ENCODE measurements at regions of chr14 and their contacts with region 1.

Region 1: DNA sequence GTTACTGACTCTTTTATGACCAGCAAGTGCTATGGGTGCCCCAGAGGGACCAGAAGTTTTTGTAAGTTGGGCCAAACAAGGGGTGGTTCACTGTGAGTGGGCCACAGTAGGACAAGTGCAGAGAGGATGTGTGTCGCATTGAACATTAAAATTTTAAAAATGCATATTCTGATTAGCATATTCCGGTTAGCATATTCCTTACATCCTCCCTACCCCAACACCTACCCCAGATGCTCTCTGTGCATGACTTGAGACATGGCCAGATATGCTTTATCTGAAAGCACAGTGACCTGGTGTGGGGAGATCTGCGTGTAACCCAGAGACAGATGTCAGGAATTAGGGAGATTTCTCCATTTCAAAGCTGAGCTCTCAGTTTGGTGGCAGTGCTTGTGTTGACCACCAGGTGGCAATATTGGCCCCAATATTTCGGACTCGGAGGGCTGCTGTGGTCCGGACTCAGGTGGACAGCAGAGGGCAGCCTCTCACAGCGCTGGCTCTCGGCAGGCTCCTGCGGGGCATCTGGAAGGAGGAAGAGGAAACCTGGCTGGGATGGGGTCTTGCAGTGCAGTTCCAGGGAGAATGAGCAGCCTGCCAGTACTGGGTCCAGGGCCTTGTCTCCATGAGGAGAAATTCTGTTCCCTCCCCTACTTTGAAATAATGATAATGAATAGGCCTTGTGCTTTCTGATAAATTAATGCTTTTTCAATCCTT is 1.6 kb upstream of the CEBPE start:
- DNase-seq: peak; percentile 81 to 92
- ATAC-seq: peak; percentile 86 to 95
- H3K4me3 ChIP-seq: no peak overlapping the region
- H3K27ac ChIP-seq: no peak overlapping the region; a peak in 1 of 6 replicates
- H3K4me1 ChIP-seq: peaks cover 2% of the 10 kb centered on the region; the same call in 2 of the 3 replicates
- CTCF ChIP-seq: peak; percentile 100
- EP300 ChIP-seq: no peak
- POLR2A ChIP-seq: no peak
- RAD21 ChIP-seq: peak; percentile 99

Region 2: DNA sequence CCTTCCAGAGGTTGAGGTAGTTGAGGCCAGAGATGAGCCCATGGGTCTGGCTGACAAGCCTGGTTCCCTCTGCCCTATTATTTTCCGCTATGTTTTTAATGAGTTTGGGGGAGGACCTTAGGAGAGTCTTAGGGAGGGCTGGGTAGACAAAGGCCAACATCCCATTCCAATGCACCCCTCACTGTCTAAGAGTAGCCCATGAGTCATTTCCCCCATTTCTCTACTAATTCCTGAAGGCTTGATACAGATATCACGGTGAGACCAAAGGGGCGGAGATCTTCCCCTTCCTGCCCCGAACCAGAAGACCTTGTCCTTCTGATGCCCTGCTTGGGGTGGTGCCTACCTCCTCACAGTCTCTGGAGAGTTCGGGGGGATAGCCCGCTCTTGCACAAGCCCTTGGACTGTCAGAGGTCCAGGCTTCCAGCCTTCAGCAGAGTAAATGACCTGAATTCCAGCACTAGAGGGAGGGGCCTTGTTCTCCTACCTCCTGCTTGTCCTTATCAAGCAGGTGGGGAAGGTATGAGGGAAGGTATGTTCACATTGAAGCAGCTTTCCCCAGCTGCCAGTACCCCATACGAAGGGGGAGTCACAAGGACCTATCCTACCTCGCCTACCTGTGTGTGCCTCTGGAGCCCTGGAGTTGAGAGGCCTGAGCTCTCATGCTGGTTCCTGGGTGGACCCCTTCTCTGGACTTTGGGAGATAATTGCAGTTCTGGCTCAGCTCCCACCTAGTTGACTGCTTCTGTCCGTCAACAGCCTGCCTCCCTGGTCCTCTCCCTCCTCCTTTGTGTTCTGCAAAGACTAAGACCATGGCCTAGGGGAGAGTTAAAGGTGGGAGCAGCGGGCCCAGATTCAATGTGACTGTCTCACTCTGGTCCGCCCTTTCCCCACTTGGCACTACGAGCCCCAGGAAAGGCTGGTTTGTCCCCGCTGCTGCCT is 75.0 kb before region 1 on chr14:
- CTCF ChIA-PET with region 1: no interaction called
- POLR2A ChIA-PET with region 1: no interaction called
- DNase-seq: no peak
- ATAC-seq: no peak
- H3K4me3 ChIP-seq: no peak overlapping the region
- H3K27ac ChIP-seq: no peak overlapping the region
- H3K4me1 ChIP-seq: peaks cover 6% of the 10 kb centered on the region; the same call in 1 of the 3 replicates
- CTCF ChIP-seq: no peak
- EP300 ChIP-seq: no peak
- POLR2A ChIP-seq: no peak
- RAD21 ChIP-seq: no peak

Region 3: DNA sequence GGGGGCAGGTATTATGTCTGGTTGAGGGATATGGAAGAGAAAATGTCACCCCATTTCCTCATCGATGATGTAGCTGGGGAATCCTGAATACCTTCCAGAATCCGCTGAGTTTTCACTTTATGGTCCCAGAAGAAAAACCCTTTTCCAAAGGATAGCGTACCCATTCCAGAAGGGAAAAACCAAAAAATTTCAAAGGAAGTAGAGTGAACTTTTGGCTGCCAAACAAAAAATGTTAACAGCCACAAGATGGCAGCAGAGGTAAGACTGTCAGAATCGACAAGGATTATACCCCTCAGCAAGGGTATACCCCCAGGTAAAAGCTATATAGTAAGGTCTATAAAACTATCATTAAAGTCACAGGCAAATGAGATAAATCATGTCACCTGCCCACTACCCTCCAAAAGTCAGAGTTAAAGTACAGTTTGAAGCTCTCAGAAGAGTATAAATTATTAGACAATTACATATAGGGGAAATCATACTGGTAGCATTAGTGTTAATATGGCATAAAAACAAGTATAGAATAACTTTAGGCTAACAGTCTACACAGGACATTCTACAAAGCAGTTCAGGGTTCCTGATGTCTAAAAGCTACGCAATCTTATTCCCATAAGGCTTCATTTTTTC is 43.8 kb before region 1 on chr14:
- CTCF ChIA-PET with region 1: interaction called, 25 read pairs
- POLR2A ChIA-PET with region 1: no interaction called
- DNase-seq: peak in 1 of 2 experiments; percentile 33
- ATAC-seq: peak; percentile 51 to 55; a peak in 3 of 6 replicates
- H3K4me3 ChIP-seq: no peak overlapping the region
- H3K27ac ChIP-seq: no peak overlapping the region; a peak in 1 of 6 replicates
- H3K4me1 ChIP-seq: peaks cover 49% of the 10 kb centered on the region
- CTCF ChIP-seq: peak; percentile 80
- EP300 ChIP-seq: no peak
- POLR2A ChIP-seq: no peak
- RAD21 ChIP-seq: peak; percentile 48 to 56; a peak in 4 of 5 replicates

Region 4: DNA sequence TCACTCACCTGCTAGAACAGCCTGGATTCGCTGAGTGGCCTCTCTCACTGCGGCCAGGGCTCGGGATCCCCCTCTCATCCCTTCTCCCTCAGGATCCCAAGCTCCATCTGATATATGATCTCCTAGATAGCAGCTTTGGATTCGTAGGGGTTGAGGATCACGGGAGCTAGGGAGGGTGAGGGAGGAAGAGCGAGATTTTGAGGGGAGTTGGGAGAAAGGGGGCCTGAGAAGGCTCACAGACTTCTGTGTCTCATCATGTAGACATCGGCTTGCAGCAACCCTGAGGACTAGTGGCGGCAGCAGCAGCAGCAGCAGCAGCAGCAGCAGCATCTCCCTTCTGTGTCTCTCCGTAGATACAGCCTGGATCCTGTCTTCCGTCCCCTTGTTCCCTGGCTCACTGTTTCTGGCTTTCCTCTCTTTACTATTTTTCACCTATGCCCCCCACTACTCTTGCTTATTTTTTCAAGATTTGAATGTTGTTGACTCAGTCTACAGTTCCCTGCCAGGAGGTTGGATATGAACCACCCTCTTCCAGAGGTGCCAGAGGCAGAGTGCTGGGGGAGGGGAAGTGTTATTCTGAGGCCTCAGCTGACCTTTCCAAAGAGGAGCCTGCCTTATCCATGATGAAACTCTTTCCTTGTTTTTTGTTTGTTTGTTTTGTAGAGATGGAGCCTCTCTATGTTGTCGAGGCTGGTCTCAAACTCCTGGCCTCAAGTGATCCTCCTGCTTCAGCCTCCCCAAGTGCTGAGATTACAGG is 15.9 kb before region 1 on chr14 and contains the start of gene CIROP:
- CTCF ChIA-PET with region 1: interaction called, 49 read pairs
- POLR2A ChIA-PET with region 1: no interaction called
- DNase-seq: no peak
- ATAC-seq: peak in 1 of 2 experiments; percentile 5; a peak in 1 of 6 replicates
- H3K4me3 ChIP-seq: no peak within 1 kb of the TSS
- H3K27ac ChIP-seq: no peak within 1 kb of the TSS
- H3K4me1 ChIP-seq: 0 out of 3 replicates have a peak, but pooled peaks cover 4% of the 10 kb centered on the region
- CTCF ChIP-seq: no peak
- EP300 ChIP-seq: no peak
- POLR2A ChIP-seq: no peak
- RAD21 ChIP-seq: no peak
- polyA plus RNA-seq, gene CIROP: 0.03 TPM in 1 of 2 replicates, not detected in the other

Region 5: GRCh38 chr14:23141671-23142451 is 21.2 kb after region 1 on chr14:
- CTCF ChIA-PET with region 1: interaction called, 80 read pairs
- POLR2A ChIA-PET with region 1: no interaction called
- DNase-seq: peak; percentile 34 to 53
- ATAC-seq: peak; percentile 62 to 70; a peak in 5 of 6 replicates
- H3K4me3 ChIP-seq: no peak overlapping the region
- H3K27ac ChIP-seq: peak overlapping the region in 1 of 2 experiments; percentile 49; a peak in 2 of 6 replicates
- H3K4me1 ChIP-seq: peaks cover 25% of the 10 kb centered on the region
- CTCF ChIP-seq: no peak
- EP300 ChIP-seq: no peak
- POLR2A ChIP-seq: no peak
- RAD21 ChIP-seq: no peak

Region 6: GRCh38 chr14:23162800-23163199 is 42.1 kb after region 1 on chr14:
- CTCF ChIA-PET with region 1: interaction called, 848 read pairs
- POLR2A ChIA-PET with region 1: no interaction called
- DNase-seq: no peak
- ATAC-seq: no peak
- H3K4me3 ChIP-seq: no peak overlapping the region
- H3K27ac ChIP-seq: no peak overlapping the region
- H3K4me1 ChIP-seq: no peaks in the 10 kb centered on the region
- CTCF ChIP-seq: no peak
- EP300 ChIP-seq: no peak
- POLR2A ChIP-seq: no peak
- RAD21 ChIP-seq: no peak

Region 7: DNA sequence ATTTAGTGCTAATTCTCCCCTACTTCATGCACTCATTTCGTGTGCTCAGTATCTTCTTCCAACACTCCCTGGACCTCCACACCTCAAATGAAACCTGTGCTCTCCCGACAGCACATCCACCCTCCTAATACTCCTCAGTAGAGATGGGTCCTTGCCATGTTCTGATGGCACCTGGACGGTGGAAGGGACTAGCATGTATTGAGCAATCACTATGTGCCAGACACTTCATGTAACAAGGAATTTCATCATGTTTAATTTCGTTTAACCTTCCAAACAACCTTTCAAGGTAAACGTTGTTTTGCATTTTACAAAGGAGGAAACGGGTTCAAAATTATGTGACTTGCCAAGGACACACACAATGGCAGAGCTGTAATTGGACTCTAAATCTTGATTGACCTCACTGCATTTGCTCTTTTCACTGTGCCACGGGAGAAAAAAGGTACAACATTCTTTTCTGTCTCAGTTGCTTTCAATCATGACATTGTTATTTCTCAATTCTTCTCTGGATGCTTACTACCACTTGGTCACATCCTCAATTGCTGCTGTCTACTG is 74.9 kb after region 1 on chr14:
- CTCF ChIA-PET with region 1: interaction called, 848 read pairs
- POLR2A ChIA-PET with region 1: no interaction called
- DNase-seq: no peak
- ATAC-seq: no peak
- H3K4me3 ChIP-seq: no peak overlapping the region
- H3K27ac ChIP-seq: no peak overlapping the region
- H3K4me1 ChIP-seq: no peaks in the 10 kb centered on the region
- CTCF ChIP-seq: no peak
- EP300 ChIP-seq: no peak
- POLR2A ChIP-seq: no peak
- RAD21 ChIP-seq: no peak

Region 8: GRCh38 chr14:23301288-23301968 is 180.7 kb after region 1 on chr14:
- CTCF ChIA-PET with region 1: interaction called, 10 read pairs
- POLR2A ChIA-PET with region 1: interaction called, 6 read pairs
- DNase-seq: peak; percentile 96 to 97
- ATAC-seq: peak; percentile 82 to 89
- H3K4me3 ChIP-seq: peak overlapping the region; percentile 63
- H3K27ac ChIP-seq: peak overlapping the region; percentile 92
- H3K4me1 ChIP-seq: peaks cover 23% of the 10 kb centered on the region
- CTCF ChIP-seq: peak; percentile 92
- EP300 ChIP-seq: no peak
- POLR2A ChIP-seq: peak; percentile 45
- RAD21 ChIP-seq: no peak; a peak in 2 of 5 replicates